Right cardiac atrium (tissue), 5 donors: ENCODE measurements at regions of chr5 and their contacts with region 1.

Region 1: DNA sequence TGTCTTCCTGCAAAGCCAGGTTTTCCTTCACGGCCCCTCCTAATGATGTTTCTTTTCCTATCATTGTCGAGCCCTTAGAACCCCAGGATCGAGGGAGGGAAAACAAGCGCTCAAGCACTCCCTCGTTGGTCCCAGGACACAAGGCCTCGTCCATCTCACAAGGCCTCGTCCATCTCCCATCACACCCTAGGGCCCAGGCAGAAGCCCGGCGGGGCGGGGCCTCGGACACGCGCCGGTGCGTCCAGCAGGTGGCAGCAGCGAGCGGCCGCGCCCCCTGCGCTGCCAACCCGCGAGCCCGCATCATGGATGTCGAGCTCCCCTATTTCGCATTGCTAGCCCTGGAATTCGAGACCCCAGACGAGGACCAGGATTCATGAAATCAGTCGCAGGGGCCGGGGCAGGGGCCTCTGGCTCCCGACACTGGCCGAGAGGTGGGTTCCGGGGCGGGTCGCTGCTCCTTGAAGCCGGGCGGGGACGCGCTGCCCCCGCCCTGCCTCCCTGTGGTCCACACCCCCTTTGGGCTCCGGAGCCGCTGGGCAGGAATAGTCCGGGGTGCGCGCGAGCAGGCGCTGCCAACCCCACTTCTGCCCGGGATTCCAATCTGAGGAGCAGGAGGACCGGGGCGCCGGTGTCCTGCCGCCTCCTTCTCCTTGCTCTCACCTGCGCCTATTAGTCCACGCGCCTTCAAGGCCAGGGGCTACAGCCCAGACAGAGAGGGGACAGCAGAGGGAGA is at the start of gene ABLIM3:
- DNase-seq: peak; percentile 73 to 91 (median 91)
- ATAC-seq: peak; percentile 87 to 88
- H3K4me3 ChIP-seq: peak within 1 kb of the TSS; percentile 68
- H3K27ac ChIP-seq: peak within 1 kb of the TSS; percentile 99
- H3K4me1 ChIP-seq: peaks cover 10% of the 10 kb centered on the region
- H3K27me3 ChIP-seq: no peaks in the 10 kb centered on the region
- total RNA-seq, gene ABLIM3: 140 to 185 (median 161) TPM

Region 2: DNA sequence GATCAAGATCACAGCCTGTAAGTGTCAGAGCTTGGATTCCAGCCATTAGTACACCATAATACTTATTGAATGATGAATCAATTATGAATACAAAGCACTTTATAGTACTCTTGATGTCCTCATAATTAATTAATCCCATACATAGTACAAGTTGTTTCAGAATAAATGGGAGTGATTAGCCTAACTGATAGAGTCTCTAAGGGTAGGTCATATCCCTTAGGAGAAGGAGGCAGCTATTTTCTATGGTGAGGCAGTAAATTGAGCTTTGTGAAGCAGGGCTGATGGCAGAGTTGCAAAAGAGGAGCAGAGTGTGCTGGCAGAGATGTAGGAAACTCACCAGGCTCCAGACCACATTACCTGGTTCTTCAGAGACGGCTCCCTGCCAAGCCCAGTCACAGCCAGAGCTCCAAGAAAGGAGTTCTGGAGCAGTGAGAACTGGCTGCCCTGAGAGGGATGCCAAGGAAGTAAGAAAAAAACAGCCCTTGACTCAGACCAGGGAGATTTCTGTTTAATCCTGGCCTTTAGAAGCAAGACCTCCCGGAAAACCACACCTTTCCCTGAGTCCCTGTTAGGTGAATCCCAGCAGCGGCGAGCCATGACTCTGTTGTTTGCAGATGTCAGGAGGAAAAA is 191.4 kb before region 1 on chr5:
- intact Hi-C with region 1: no loop called
- DNase-seq: no peak
- ATAC-seq: peak; percentile 57 to 65
- H3K4me3 ChIP-seq: no peak overlapping the region
- H3K27ac ChIP-seq: no peak overlapping the region
- H3K4me1 ChIP-seq: peaks cover 2% of the 10 kb centered on the region
- H3K27me3 ChIP-seq: no peaks in the 10 kb centered on the region

Region 3: DNA sequence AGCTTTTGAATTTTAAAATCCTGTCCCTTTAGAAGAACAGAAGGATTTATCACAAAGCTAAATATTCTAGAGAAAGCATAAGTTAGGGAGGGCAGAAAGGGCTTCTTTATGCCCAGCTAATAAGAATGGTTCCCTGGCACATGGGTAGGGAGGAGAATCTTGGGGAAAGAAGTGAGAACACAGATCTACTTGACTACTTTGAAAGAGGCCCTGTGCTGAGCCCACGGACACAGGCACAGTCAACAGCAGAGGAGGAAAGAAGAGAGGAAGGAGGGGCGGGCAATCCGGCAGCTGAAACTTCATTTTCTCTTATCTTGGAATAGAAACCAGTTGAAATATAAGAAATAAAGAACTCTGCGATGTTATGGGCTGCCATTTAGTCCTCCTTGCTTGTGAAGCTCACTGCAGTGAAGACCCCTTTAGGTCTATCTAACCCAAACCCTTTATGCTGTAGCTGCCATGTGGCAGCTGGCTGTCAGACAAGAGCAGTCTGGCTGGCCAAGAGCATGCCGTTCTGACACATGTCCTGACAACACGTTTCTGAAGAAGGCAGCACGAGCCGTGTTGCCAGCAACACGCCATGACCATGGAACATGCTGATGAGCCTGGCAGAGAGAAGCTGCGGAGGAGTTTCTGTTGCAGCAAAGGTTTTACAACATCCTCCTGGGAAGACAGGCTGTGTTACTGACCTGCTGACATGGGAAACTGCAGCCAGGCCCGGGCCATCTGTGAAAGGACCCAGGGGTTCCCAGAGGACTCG is 34.1 kb after region 1 on chr5:
- intact Hi-C with region 1: loop called in 1 of 4 experiments (anchors 5 kb)
- DNase-seq: peak; percentile 78 to 91 (median 91)
- ATAC-seq: peak; percentile 77 to 82
- H3K4me3 ChIP-seq: no peak overlapping the region
- H3K27ac ChIP-seq: peak overlapping the region; percentile 99
- H3K4me1 ChIP-seq: peaks cover 42% of the 10 kb centered on the region
- H3K27me3 ChIP-seq: no peaks in the 10 kb centered on the region

Region 4: GRCh38 chr5:149228618-149229297 is 87.4 kb after region 1 on chr5:
- intact Hi-C with region 1: loop called (anchors 2 to 5 kb)
- DNase-seq: peak in 2 of 3 donors; percentile 51 to 64
- ATAC-seq: peak; percentile 96
- H3K4me3 ChIP-seq: no peak overlapping the region
- H3K27ac ChIP-seq: peak overlapping the region; percentile 46
- H3K4me1 ChIP-seq: peaks cover 2% of the 10 kb centered on the region
- H3K27me3 ChIP-seq: no peaks in the 10 kb centered on the region